ENCODE measurements at regions of chr2 and their contacts with region 1.

Region 1: GRCh38 chr2:36322108-36322507 is 33.5 kb upstream of the CRIM1 start:
- DNase-seq: peak; percentile 70
- ATAC-seq: peak; percentile 91
- H3K4me3 ChIP-seq: no peak overlapping the region
- H3K27ac ChIP-seq: no peak overlapping the region
- H3K4me1 ChIP-seq: no peaks in the 10 kb centered on the region
- H3K27me3 ChIP-seq: peaks cover 6% of the 10 kb centered on the region; the same call in 1 of the 2 replicates
- CTCF ChIP-seq: peak; percentile 57
- POLR2A ChIP-seq: no peak
- RAD21 ChIP-seq: peak; percentile 72

Region 2: DNA sequence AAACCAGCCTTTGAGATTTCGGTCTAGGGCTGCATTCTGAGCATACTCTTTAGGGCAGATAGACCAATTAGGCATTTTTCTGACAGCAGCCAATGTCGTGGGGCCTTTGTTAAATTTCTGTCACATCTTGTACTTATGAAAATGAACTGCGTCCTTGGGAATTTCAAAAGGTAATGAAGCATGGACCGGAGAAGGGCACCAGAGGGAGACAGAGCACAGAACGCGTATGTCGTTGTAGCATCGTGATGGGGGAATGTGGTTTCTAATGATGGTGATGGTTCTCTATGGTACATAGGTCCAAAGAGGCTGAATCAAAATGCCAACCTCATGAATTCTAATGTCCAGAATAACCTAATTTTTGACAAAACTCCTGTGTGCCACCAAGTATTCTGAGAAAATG is 450.4 kb before region 1 on chr2:
- CTCF ChIA-PET with region 1: no interaction called
- POLR2A ChIA-PET with region 1: no interaction called
- dilution Hi-C with region 1: no loop called
- in situ Hi-C with region 1: no loop called
- intact Hi-C with region 1: loop called (anchors 10 kb)
- DNase-seq: no peak
- ATAC-seq: no peak
- H3K4me3 ChIP-seq: no peak overlapping the region
- H3K27ac ChIP-seq: no peak overlapping the region
- H3K4me1 ChIP-seq: no peaks in the 10 kb centered on the region
- H3K27me3 ChIP-seq: no peaks in the 10 kb centered on the region
- CTCF ChIP-seq: no peak
- POLR2A ChIP-seq: no peak
- RAD21 ChIP-seq: no peak

Region 3: GRCh38 chr2:35973132-35973736 is 348.9 kb before region 1 on chr2:
- CTCF ChIA-PET with region 1: no interaction called
- POLR2A ChIA-PET with region 1: no interaction called
- dilution Hi-C with region 1: no loop called
- in situ Hi-C with region 1: no loop called
- intact Hi-C with region 1: loop called (anchors 1 kb)
- DNase-seq: peak; percentile 42
- ATAC-seq: peak; percentile 79; the same call in 1 of the 2 replicates
- H3K4me3 ChIP-seq: no peak overlapping the region
- H3K27ac ChIP-seq: no peak overlapping the region
- H3K4me1 ChIP-seq: no peaks in the 10 kb centered on the region
- H3K27me3 ChIP-seq: no peaks in the 10 kb centered on the region
- CTCF ChIP-seq: peak; percentile 60
- POLR2A ChIP-seq: no peak
- RAD21 ChIP-seq: peak; percentile 71

Region 4: DNA sequence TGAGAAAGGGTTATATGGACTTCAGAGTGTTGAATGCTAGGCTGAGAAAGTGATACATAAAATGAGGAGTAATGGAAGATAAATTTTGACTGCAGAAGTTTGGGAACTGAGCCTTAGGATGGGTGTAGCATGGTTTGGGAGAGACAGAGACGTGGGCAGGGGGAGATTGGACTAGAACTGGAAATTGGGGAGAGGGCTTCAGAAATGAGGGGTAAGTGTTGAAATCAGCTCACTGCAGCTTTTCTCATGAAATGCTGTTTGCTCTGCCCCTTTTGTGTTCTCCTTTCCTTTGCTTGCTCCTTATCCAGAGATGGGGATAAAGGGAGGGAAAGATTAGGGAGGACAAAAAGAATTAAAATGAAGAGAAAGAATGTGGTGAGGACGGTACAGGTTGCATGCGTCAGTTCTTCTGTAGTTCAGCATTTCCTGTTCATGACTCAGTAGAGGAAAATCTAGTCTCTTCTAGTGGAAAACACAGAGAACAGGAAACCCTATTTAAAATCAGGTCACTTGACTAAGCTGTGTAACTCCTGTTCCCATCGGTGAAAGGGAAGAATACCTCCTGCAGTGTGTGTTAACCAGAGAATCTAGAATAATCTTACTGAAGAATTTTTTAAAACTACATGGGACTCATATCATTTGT is 139.1 kb after region 1 on chr2:
- CTCF ChIA-PET with region 1: no interaction called
- POLR2A ChIA-PET with region 1: no interaction called
- dilution Hi-C with region 1: no loop called
- in situ Hi-C with region 1: no loop called
- intact Hi-C with region 1: no loop called
- DNase-seq: peak; percentile 96
- ATAC-seq: peak; percentile 67
- H3K4me3 ChIP-seq: no peak overlapping the region
- H3K27ac ChIP-seq: peak overlapping the region; percentile 96
- H3K4me1 ChIP-seq: peaks cover 29% of the 10 kb centered on the region
- H3K27me3 ChIP-seq: no peaks in the 10 kb centered on the region
- CTCF ChIP-seq: no peak
- POLR2A ChIP-seq: no peak
- RAD21 ChIP-seq: 0 out of 2 replicates have a peak, but pooled peaks have one; percentile 5